CD14-positive monocyte (primary cell): ENCODE measurements at regions of chr12 and their contacts with region 1.

Region 1: GRCh38 chr12:57248934-57249742 is 1.8 kb downstream of the STAC3 start:
- DNase-seq: peak; percentile 62 to 89 (median 76)
- H3K4me3 ChIP-seq: peak overlapping the region; percentile 46 to 73 (median 63)
- H3K4me3 Mint-ChIP-seq: peak overlapping the region; percentile 81 to 96
- H3K27ac ChIP-seq: peak overlapping the region; percentile 63 to 79
- H3K27ac Mint-ChIP-seq: peak overlapping the region; percentile 75 to 95 (median 90)
- H3K4me1 ChIP-seq: peaks cover 29% of the 10 kb centered on the region in 2 donors
- H3K4me1 Mint-ChIP-seq: peaks cover 34% of the 10 kb centered on the region
- H3K27me3 ChIP-seq: no peaks in the 10 kb centered on the region
- H3K27me3 Mint-ChIP-seq: peaks cover 2 to 6% (median 4%) of the 10 kb centered on the region in 3 donors
- CTCF ChIP-seq: no peak

Region 2: GRCh38 chr12:56529290-56530055 is 719.7 kb before region 1 on chr12:
- intact Hi-C with region 1: no loop called
- DNase-seq: no peak
- H3K4me3 ChIP-seq: no peak overlapping the region
- H3K4me3 Mint-ChIP-seq: no peak overlapping the region
- H3K27ac ChIP-seq: no peak overlapping the region
- H3K27ac Mint-ChIP-seq: no peak overlapping the region
- H3K4me1 ChIP-seq: no peaks in the 10 kb centered on the region
- H3K4me1 Mint-ChIP-seq: peaks cover 11% of the 10 kb centered on the region
- H3K27me3 ChIP-seq: no peaks in the 10 kb centered on the region
- H3K27me3 Mint-ChIP-seq: peaks cover 0 to 1% (median 0%) of the 10 kb centered on the region in 3 donors
- CTCF ChIP-seq: no peak

Region 3: GRCh38 chr12:57213058-57213715 is 36.0 kb before region 1 on chr12:
- intact Hi-C with region 1: loop called in 1 of 2 experiments (anchors 5 kb)
- DNase-seq: peak; percentile 74 to 77 (median 76)
- H3K4me3 ChIP-seq: no peak overlapping the region
- H3K4me3 Mint-ChIP-seq: peak overlapping the region in 1 of 2 donors; percentile 84
- H3K27ac ChIP-seq: no peak overlapping the region
- H3K27ac Mint-ChIP-seq: peak overlapping the region in 1 of 7 donors; percentile 44
- H3K4me1 ChIP-seq: peaks cover 26 to 41% of the 10 kb centered on the region in 2 donors
- H3K4me1 Mint-ChIP-seq: peaks cover 33% of the 10 kb centered on the region
- H3K27me3 ChIP-seq: peaks cover 38 to 45% of the 10 kb centered on the region in 2 donors
- H3K27me3 Mint-ChIP-seq: peaks cover 42 to 49% (median 47%) of the 10 kb centered on the region in 3 donors
- CTCF ChIP-seq: peak; percentile 91

Region 4: GRCh38 chr12:57368349-57369095 is 119.4 kb after region 1 on chr12:
- intact Hi-C with region 1: no loop called
- DNase-seq: no peak
- H3K4me3 ChIP-seq: no peak overlapping the region
- H3K4me3 Mint-ChIP-seq: no peak overlapping the region
- H3K27ac ChIP-seq: no peak overlapping the region
- H3K27ac Mint-ChIP-seq: no peak overlapping the region
- H3K4me1 ChIP-seq: no peaks in the 10 kb centered on the region
- H3K4me1 Mint-ChIP-seq: peaks cover 3% of the 10 kb centered on the region
- H3K27me3 ChIP-seq: no peaks in the 10 kb centered on the region
- H3K27me3 Mint-ChIP-seq: no peaks in the 10 kb centered on the region
- CTCF ChIP-seq: no peak

Region 5: GRCh38 chr12:58283553-58283952 is 1034.4 kb after region 1 on chr12:
- intact Hi-C with region 1: no loop called
- DNase-seq: no peak
- H3K4me3 ChIP-seq: no peak overlapping the region
- H3K4me3 Mint-ChIP-seq: no peak overlapping the region
- H3K27ac ChIP-seq: no peak overlapping the region
- H3K27ac Mint-ChIP-seq: no peak overlapping the region
- H3K4me1 ChIP-seq: no peaks in the 10 kb centered on the region
- H3K4me1 Mint-ChIP-seq: no peaks in the 10 kb centered on the region
- H3K27me3 ChIP-seq: no peaks in the 10 kb centered on the region
- H3K27me3 Mint-ChIP-seq: peaks cover 0 to 3% (median 2%) of the 10 kb centered on the region in 3 donors
- CTCF ChIP-seq: no peak